Endothelial cell of umbilical vein (primary cell): ENCODE measurements at regions of chr12 and their contacts with region 1.

Region 1: DNA sequence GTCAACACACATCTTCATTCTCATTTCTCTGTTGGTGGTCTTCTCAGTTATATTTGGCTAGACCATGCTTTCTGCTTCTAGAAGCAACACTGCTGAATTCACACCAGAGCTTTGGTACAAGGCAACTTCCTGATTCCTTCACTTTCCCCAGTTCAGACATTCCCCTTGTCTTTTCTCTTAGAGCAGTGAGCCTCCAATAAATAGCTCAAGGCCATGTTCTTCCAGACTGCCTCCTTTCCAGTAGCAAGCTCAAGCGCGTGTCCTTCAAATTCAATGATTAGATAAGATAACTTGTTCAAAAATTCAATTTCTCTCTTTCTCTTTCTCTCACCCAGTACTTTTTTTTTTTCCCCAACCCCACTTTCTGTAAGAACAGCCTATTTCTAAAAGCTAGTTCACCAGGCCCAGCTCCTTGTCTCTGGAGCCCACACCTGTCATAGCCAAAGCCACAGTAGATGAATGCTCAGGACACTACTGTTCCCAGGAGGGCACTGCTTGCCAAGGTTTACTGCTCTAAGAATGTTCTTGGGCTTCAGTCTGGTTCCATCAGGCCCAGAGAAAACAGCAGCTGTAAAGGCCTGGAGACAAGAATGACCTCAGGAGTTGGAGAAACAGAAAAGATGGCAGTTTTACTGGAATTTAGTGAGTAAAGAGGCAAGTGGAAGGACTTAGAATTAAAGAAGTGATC is 17.7 kb downstream of the TBK1 start:
- DNase-seq: no peak
- H3K4me3 ChIP-seq: no peak overlapping the region
- H3K27ac ChIP-seq: no peak overlapping the region
- H3K4me1 ChIP-seq: no peaks in the 10 kb centered on the region
- H3K27me3 ChIP-seq: no peaks in the 10 kb centered on the region
- CTCF ChIP-seq: no peak
- POLR2A ChIP-seq: no peak

Region 2: DNA sequence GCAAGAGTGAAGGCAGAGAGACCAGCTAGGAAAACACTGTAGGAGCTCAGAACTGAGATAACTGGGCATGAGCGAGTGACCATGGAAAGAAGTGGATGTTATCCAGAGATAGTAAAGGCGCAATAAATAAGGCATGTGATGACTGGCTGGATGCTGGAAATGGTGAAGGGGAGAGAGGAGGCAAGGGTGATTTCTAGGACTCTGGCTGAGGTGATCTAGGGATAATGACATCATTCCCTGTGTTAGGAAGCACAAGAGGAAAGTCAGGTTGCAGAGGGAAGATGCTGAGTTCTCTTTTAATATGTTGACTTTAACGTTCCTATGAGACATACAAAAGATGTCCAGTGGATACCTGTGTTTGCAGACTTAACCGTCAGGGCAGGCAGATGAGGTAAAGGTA is 157.7 kb before region 1 on chr12:
- CTCF ChIA-PET with region 1: no interaction called
- POLR2A ChIA-PET with region 1: no interaction called
- dilution Hi-C with region 1: no loop called
- intact Hi-C with region 1: no loop called
- DNase-seq: no peak
- H3K4me3 ChIP-seq: no peak overlapping the region
- H3K27ac ChIP-seq: no peak overlapping the region
- H3K4me1 ChIP-seq: no peaks in the 10 kb centered on the region
- H3K27me3 ChIP-seq: no peaks in the 10 kb centered on the region
- CTCF ChIP-seq: no peak
- POLR2A ChIP-seq: no peak

Region 3: DNA sequence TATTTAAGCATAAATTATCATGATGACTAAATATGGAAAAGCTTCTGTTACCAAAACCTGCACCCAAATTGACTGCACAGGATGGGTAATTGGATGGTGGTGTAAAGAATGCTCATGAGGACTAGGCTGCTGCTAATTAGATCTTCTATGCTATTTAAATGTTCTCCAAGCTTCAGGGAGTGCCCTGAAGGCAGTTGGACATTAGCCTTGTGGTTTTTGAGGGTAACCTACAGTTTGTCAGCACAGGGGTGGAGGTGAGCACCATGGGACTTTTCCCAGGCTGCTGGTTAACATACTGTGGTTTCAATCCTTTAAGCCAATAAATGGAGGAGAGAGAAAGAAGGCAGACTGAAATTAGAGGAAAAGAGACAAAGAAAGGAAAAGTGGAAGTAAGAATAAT is 506.5 kb after region 1 on chr12:
- CTCF ChIA-PET with region 1: no interaction called
- POLR2A ChIA-PET with region 1: interaction called, 12 read pairs
- dilution Hi-C with region 1: no loop called
- intact Hi-C with region 1: no loop called
- DNase-seq: no peak
- H3K4me3 ChIP-seq: no peak overlapping the region
- H3K27ac ChIP-seq: no peak overlapping the region
- H3K4me1 ChIP-seq: no peaks in the 10 kb centered on the region
- H3K27me3 ChIP-seq: peaks cover 2 to 3% of the 10 kb centered on the region in 2 experiments
- CTCF ChIP-seq: no peak
- POLR2A ChIP-seq: no peak